ENCODE measurements at regions of chr3 and their contacts with region 1.

Region 1: DNA sequence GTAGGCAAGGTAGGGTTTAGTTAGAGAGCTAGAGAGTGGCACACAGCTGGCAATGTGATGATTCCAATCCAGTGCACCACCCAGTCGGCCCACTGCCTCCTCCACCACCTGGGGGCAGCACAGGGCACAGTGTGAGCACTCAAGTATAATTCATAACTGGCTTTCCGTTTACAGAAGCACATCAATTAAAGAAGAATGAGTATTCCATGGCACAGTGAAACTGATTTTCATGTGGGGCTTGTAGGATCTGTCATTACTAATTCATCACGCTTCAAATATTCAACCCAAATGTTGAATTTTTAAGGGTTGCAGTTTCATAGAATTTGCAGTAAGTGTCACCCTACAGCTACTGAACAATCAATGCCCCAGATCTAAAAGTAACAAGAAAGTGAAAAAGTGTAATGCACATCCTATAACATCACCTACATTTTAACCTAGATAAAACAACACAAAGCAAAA is 149.9 kb downstream of the IGSF11 start:
- DNase-seq: peak; percentile 89
- H3K4me3 ChIP-seq: no peak overlapping the region
- H3K27ac ChIP-seq: no peak overlapping the region
- H3K4me1 ChIP-seq: peaks cover 0 to 8% (median 0%) of the 10 kb centered on the region in 6 donors
- H3K27me3 ChIP-seq: peaks cover 0 to 27% (median 6%) of the 10 kb centered on the region in 7 donors
- CTCF ChIP-seq: peak; percentile 21 to 88 (median 67)
- POLR2A ChIP-seq: no peak

Region 2: DNA sequence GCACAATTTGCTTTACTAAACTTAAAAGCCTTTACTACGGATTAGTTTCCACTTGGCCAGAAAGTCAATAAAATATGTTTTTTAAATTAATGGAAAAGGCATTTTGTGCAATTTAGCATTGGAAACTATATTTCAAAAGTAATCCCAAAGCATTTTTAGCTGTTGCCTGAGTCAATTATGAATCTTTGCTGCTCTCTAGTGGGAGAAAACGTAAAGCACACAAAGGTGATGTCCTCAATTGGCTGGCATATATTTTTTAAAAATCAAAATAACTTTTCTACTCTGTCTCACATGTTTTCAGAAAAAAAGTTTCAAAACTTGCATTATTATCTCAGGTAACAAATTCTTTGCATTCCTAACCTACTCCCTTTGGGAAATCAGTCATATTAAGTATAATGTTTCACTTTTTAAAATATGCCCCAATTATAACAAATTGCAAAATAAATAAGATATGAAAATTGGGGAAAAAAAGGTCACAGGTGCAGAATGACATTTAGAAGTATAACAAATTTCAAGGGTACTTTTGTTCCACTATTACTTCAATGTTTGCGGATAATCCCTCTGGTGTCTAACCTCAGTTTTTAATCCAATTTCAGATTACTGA is 213.9 kb after region 1 on chr3:
- intact Hi-C with region 1: loop called (anchors 5 kb)
- DNase-seq: no peak
- H3K4me3 ChIP-seq: no peak overlapping the region
- H3K27ac ChIP-seq: no peak overlapping the region
- H3K4me1 ChIP-seq: no peaks in the 10 kb centered on the region
- H3K27me3 ChIP-seq: no peaks in the 10 kb centered on the region
- CTCF ChIP-seq: peak in 9 of 11 experiments; percentile 16 to 64 (median 51)
- POLR2A ChIP-seq: no peak

Region 3: GRCh38 chr3:119240591-119241434 is 356.0 kb after region 1 on chr3 and contains the start of gene B4GALT4:
- intact Hi-C with region 1: loop called (anchors 5 kb)
- DNase-seq: peak; percentile 97
- H3K4me3 ChIP-seq: peak within 1 kb of the TSS; percentile 68 to 89 (median 73)
- H3K27ac ChIP-seq: peak within 1 kb of the TSS; percentile 92 to 96 (median 94)
- H3K4me1 ChIP-seq: peaks cover 23 to 56% (median 44%) of the 10 kb centered on the region in 6 donors
- H3K27me3 ChIP-seq: no peaks in the 10 kb centered on the region
- CTCF ChIP-seq: peak in 1 of 11 experiments; percentile 6
- POLR2A ChIP-seq: peak; percentile 31 to 89 (median 47)
- total RNA-seq, gene B4GALT4: 13.6 to 26.2 (median 15.4) TPM

Region 4: DNA sequence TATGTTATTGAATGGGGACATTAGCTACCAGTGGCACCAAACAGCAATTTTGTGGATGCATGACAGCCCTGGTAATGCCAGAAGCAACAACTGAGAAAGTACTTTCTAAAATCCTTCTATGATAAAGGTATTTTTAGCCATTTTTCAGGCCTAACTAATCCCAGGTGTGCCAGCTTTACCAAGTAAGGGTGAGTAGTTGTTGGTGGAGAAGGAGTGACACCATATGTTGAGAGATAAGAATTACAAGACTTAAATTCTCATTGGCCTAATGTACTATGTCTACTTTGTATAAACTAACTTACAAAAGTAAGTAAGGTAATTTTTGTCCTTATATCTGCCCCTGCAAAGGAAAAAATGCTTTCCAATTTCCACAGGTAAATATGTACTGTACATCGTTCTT is 796.5 kb after region 1 on chr3:
- intact Hi-C with region 1: loop called (anchors 5 kb)
- DNase-seq: no peak
- H3K4me3 ChIP-seq: no peak overlapping the region
- H3K27ac ChIP-seq: no peak overlapping the region
- H3K4me1 ChIP-seq: peaks cover under 1 to 14% (median 11%) of the 10 kb centered on the region in 6 donors
- H3K27me3 ChIP-seq: no peaks in the 10 kb centered on the region
- CTCF ChIP-seq: peak in 8 of 11 experiments; percentile 30 to 62 (median 44)
- POLR2A ChIP-seq: no peak